Activated naive CD4-positive, alpha-beta T cell treated with anti-CD3 and anti-CD28 coated beads for 36 hours (primary cell): ENCODE measurements at regions of chr1 and their contacts with region 1.

Region 1: DNA sequence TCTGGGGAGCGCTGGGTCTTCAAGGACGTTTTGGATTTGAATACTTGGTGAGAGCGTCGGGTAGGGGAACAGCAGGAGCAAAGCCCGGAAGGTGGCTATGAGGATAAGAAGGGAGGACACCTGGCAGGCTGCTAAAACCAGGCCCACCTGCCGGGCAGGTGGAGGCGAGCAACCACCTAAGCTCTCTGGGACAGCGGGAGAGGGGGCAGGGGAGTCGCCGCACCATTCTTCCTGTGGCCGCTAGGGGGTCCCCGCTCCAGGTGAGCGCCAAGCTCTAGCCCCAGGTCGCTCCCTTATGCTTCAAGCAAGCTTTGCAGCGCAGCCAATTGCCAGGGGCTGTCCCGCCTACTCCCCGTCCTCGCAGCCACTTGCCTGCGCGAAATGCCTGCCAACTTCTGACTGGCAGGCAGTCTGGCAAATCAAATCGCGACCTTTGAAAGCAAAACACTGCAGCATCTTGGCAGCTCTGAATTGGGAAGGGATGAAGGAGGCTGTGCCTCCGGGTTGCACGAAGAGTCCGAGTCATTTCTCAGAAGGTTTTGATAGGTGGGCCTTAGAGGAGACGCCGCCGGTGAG is at the start of gene NIPAL3:
- DNase-seq: peak; percentile 100
- H3K4me3 Mint-ChIP-seq: peak within 1 kb of the TSS; percentile 94
- H3K27ac Mint-ChIP-seq: peak within 1 kb of the TSS; percentile 94
- H3K4me1 Mint-ChIP-seq: peaks cover 56% of the 10 kb centered on the region
- H3K27me3 Mint-ChIP-seq: no peaks in the 10 kb centered on the region
- total RNA-seq, gene NIPAL3: 58.1 to 59.2 TPM

Region 2: DNA sequence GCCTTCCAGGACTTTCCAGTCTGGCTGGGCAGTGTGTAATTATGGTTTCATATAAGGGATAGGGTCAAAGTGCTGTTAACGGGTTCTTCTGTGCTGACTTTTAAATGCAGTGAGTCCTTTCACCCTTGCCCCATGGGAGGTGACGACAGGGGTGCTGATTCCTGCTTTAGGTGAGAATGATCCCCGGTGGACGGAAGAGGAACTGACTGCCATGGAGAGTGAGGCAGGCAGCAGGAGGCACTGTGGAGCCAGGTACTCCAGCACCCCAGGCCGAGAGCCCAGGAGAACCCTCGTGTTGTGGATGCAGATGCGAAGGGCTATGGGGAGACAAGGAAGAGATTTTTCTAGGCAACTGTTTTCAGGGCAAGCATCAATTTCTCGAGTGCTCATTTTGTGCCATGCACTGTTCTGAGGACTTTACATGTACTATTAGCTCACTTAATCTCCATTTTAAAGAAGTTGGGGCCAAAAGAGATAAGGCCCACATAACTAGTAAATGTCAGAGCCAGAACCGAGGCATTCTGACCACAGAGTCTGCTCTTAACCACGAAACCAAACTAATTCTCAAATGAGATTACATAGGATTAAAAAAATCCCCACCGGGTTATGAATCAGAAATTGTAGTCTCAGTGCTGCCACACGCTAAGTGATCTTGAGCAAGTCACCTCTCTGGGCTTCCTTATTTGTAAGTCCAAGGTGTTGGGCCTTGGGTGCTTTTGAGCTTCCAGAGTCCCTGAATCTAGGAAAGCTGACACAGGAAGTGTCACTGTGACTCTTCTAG is 30.1 kb before region 1 on chr1:
- CTCF ChIA-PET with region 1: interaction called, 3 read pairs
- intact Hi-C with region 1: loop called (anchors 2 kb)
- DNase-seq: peak; percentile 71
- H3K4me3 Mint-ChIP-seq: no peak overlapping the region
- H3K27ac Mint-ChIP-seq: no peak overlapping the region
- H3K4me1 Mint-ChIP-seq: peaks cover 21% of the 10 kb centered on the region
- H3K27me3 Mint-ChIP-seq: no peaks in the 10 kb centered on the region

Region 3: GRCh38 chr1:24491577-24492360 is 76.3 kb after region 1 on chr1:
- CTCF ChIA-PET with region 1: interaction called, 9 read pairs
- intact Hi-C with region 1: loop called (anchors 1 kb)
- DNase-seq: no peak
- H3K4me3 Mint-ChIP-seq: no peak overlapping the region
- H3K27ac Mint-ChIP-seq: no peak overlapping the region
- H3K4me1 Mint-ChIP-seq: peaks cover 50% of the 10 kb centered on the region
- H3K27me3 Mint-ChIP-seq: no peaks in the 10 kb centered on the region

Region 4: GRCh38 chr1:24526940-24527542 is 111.6 kb after region 1 on chr1:
- CTCF ChIA-PET with region 1: interaction called, 30 read pairs
- intact Hi-C with region 1: loop called (anchors 1 kb)
- DNase-seq: peak; percentile 74
- H3K4me3 Mint-ChIP-seq: no peak overlapping the region
- H3K27ac Mint-ChIP-seq: peak overlapping the region; percentile 63
- H3K4me1 Mint-ChIP-seq: peaks cover 70% of the 10 kb centered on the region
- H3K27me3 Mint-ChIP-seq: no peaks in the 10 kb centered on the region

Region 5: GRCh38 chr1:24541711-24542346 is 126.4 kb after region 1 on chr1:
- CTCF ChIA-PET with region 1: interaction called, 16 read pairs
- intact Hi-C with region 1: no loop called
- DNase-seq: peak; percentile 64
- H3K4me3 Mint-ChIP-seq: peak overlapping the region; percentile 6
- H3K27ac Mint-ChIP-seq: peak overlapping the region; percentile 92
- H3K4me1 Mint-ChIP-seq: peaks cover 73% of the 10 kb centered on the region
- H3K27me3 Mint-ChIP-seq: no peaks in the 10 kb centered on the region

Region 6: GRCh38 chr1:24635195-24635843 is 219.9 kb after region 1 on chr1:
- CTCF ChIA-PET with region 1: interaction called, 4 read pairs
- intact Hi-C with region 1: loop called (anchors 1 kb)
- DNase-seq: no peak
- H3K4me3 Mint-ChIP-seq: no peak overlapping the region
- H3K27ac Mint-ChIP-seq: no peak overlapping the region
- H3K4me1 Mint-ChIP-seq: peaks cover 11% of the 10 kb centered on the region
- H3K27me3 Mint-ChIP-seq: no peaks in the 10 kb centered on the region

Region 7: DNA sequence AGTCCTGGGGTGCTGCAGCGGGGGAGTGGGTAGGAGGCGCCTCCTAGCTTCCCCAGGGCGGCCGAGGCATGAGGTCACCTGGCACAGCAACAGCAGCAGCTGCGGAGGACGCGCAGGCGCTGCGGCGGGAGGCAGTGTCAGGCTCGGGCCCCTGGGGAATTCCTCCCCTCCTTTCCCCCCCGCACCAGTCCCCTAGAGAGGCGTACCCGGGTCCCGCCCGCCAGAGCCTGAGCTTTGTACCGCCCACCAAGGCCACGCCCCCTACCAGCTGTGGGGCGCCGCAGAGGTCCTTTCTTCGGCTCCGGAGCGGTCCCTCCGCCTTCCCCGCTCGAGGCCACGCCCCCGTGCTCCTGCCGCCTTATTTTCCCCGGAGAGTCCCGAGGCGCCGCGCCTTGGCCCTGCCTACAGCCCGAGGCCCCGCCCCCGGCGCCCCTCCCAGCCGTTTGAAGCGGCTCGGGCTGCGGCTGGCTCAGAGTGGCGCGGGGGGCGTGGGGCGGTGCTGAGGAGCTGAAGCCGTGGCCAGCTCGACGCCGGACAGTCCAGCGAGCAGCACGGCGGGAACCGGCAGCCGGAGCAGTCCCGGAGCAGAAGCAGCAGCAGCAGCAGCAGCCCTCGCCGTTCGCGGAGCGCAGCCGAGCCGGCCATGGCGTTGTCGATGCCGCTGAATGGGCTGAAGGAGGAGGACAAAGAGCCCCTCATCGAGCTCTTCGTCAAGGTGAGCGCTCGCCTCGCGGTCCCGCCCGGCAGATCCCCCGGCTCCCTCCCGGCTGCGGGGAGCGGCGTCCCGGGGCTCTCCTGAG is 329.7 kb after region 1 on chr1 and contains the start of gene CLIC4:
- CTCF ChIA-PET with region 1: no interaction called
- intact Hi-C with region 1: loop called (anchors 1 kb)
- DNase-seq: peak; percentile 100
- H3K4me3 Mint-ChIP-seq: peak within 1 kb of the TSS; percentile 88
- H3K27ac Mint-ChIP-seq: peak within 1 kb of the TSS; percentile 77
- H3K4me1 Mint-ChIP-seq: peaks cover 52% of the 10 kb centered on the region
- H3K27me3 Mint-ChIP-seq: no peaks in the 10 kb centered on the region
- total RNA-seq, gene CLIC4: 38.0 to 44.3 TPM